ENCODE measurements at regions of chr19 and their contacts with region 1.

Region 1: DNA sequence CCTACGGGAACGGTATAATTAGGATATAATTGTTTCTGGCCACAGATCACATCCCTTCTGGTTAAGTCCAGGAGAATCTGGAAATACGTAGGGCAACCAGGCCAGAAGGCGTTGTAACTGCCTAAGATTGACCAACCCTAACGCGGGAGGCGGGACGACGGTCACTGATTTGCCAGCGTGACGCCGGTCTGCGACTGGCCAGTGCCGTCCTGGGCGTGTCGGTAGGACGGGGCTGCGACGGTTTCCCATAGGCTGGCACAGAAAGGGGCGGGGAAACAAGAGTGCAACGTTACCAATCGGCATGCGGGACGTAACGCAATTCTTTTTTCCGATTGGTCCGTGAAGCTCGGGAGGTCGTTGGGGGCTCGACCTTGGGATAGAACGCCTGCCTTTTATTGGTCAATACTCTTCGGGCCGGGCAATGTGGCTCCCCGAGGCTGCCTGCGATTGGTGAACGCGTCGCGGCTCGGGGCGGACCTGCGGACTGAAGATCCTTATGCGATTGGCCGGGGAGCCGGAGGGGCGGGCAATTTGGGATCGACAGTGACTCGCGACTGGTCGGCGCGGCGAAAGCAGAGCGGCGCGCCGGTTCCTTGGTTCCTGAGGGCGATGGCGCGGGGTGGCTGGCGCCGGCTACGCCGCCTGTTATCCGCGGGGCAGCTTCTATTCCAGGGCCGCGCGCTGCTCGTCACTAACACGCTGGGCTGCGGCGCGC is at the start of gene MPV17L2:
- DNase-seq: peak; percentile 100
- H3K4me3 ChIP-seq: peak within 1 kb of the TSS; percentile 64 to 71
- H3K27ac ChIP-seq: peak within 1 kb of the TSS; percentile 93 to 96
- H3K4me1 ChIP-seq: peaks cover 6% of the 10 kb centered on the region
- H3K27me3 ChIP-seq: no peaks in the 10 kb centered on the region
- CTCF ChIP-seq: no peak
- POLR2A ChIP-seq: peak; percentile 82
- total RNA-seq, gene MPV17L2: 8.5 to 21.1 TPM

Region 2: DNA sequence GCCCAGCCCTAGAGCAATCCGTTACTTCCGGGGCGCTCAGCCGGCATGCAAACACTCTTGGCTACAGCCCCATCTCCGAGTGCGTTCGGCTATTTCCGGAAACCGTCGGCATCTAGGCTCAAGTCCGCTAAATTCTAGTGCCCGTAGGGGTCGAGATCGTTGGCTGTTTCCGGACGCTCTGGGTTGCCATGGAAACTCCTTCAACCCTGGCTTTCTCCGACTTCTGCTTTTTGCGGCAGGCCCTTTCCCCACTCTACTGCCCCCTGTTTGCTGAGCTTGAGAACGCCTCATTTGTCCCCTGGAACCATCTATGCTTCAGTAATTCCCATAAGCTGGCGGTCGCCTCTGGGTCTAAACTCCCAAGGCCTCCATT is 40.4 kb before region 1 on chr19:
- intact Hi-C with region 1: no loop called
- DNase-seq: peak; percentile 94
- H3K4me3 ChIP-seq: peak overlapping the region; percentile 75 to 92
- H3K27ac ChIP-seq: peak overlapping the region; percentile 87 to 90
- H3K4me1 ChIP-seq: peaks cover 21% of the 10 kb centered on the region
- H3K27me3 ChIP-seq: no peaks in the 10 kb centered on the region
- CTCF ChIP-seq: peak; percentile 28 to 64 (median 50)
- POLR2A ChIP-seq: no peak

Region 3: GRCh38 chr19:18224525-18225354 is 31.9 kb after region 1 on chr19:
- intact Hi-C with region 1: no loop called
- DNase-seq: peak; percentile 96
- H3K4me3 ChIP-seq: peak overlapping the region; percentile 9 to 22
- H3K27ac ChIP-seq: peak overlapping the region in 1 of 2 donors; percentile 23
- H3K4me1 ChIP-seq: peaks cover 6% of the 10 kb centered on the region
- H3K27me3 ChIP-seq: peaks cover 17% of the 10 kb centered on the region
- CTCF ChIP-seq: no peak
- POLR2A ChIP-seq: no peak

Region 4: DNA sequence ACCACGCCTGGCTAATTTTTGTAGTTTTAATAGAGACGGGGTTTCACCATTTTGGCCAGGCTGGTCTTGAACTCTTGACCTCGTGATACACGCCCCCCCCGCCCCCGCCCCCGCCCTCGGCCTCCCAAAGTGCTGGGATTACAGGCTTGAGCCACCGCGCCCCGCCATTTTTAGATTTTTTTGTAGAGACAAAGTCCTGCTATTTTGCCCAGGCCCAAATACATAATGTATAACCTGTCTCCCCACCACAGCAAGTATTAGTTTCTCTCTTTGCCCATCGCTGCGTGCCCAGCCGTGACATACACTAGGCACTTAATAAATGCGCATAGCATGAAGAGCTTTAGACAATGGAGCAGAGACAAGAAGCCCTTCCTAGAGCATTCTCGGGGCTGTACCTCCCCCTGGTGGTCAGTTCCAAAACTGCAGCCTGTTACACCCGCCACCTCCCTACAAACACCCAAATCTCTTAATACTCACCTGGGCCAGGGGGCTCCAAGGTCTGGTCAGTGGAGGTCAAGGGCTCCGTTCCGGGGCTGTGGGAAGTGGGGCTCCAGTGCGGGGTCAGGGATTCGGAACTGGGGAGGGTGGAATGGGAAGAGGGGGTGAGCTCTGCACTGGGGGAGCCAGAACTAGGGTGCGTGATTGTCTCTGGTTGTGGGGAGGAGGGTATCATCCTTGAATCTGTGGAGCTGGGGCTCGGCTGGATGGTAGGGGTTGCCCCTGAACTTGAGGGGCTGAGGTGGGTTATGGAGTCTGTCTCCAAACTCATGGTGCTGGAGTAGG is 58.9 kb after region 1 on chr19:
- intact Hi-C with region 1: loop called (anchors 5 kb)
- DNase-seq: peak; percentile 57
- H3K4me3 ChIP-seq: no peak overlapping the region
- H3K27ac ChIP-seq: no peak overlapping the region
- H3K4me1 ChIP-seq: no peaks in the 10 kb centered on the region
- H3K27me3 ChIP-seq: no peaks in the 10 kb centered on the region
- CTCF ChIP-seq: peak; percentile 90 to 96 (median 95)
- POLR2A ChIP-seq: no peak

Measured in prostate gland (tissue), 2 donors.